GM18951 (cell line): ENCODE measurements at regions of chr5 and their contacts with region 1.

Region 1: DNA sequence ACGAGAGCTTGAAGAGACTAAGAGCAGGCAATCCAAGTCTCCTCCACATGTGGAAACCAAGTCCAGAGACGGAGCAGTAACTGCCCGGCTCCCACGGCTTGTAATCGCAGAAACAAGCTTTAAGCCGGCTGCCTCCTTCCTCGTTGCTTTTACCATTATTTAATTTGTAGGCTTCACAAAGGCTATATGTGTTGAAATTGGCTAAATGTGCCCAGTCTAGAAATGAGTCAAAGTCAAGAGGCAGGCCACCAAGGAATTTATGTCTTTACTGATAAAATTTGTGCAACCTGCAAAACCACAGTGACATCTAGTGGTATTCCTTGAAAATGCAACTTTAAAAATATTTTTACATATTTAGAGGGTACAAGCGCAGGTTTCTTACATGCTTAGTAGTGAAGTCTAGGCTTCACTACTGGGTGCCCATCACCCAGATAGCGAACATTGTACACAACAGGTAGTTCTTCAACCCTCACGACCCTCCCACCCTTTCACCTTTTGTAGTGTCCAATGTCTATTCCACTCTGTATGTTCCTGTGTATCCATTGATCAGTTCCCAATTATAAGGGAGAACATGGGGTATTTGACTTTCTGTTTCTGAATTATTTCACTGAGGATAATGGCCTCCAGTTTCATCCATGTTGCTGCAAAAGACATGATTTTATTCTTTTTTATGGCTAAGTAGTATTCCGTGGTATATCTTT is 33.5 kb upstream of the EBF1 start:
- POLR2A ChIP-seq: no peak

Region 2: GRCh38 chr5:157820593-157821252 is 1312.5 kb before region 1 on chr5:
- in situ Hi-C with region 1: loop called (anchors 25 kb)
- POLR2A ChIP-seq: no peak

Region 3: GRCh38 chr5:158074992-158075769 is 1058.0 kb before region 1 on chr5:
- in situ Hi-C with region 1: loop called (anchors 25 kb)
- POLR2A ChIP-seq: no peak

Region 4: DNA sequence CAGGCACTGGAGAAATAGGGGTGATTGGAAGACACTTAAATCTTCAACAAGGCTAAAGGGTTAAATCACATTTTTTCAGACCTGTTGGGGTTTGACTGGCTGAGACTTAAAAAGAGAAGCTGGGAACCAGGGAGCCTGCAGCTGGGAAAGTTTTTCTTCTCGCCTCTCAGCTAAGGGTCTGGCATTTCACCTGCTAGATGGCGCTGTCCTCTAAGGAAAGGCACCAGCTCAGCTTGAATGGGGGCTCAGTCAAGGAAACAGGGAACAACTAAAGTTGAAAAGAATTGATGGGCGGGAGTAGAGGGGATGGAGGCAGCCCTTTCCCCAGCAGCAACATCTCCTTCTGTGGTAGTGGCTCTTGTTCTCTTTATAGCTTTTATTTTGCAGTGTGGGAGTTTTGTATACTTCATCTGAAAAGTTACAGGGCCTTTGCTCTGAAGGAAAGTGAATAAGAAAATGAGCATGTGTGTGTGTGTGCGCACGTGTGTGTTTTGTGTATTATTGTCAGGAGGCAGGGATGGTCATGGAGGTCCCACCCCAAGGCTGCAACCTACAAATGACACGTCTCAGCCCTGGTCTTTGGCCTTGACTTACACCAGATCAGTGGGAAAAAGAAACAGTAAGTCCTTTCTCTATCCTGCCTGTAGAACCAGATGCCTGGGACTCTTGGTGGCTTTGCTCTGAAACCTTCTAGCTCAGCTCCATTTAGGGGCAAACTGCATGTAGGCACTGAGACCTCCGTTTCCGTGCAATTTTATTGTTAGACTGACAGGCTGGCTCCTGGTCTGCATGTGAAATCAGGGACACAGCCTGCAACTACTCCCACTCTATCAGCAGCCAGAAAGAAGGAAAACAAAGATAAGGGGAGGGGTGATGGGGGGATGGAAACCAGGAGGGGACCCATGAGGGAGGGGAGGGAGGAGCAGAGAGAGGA is 958.0 kb before region 1 on chr5:
- in situ Hi-C with region 1: loop called (anchors 10 kb)
- POLR2A ChIP-seq: no peak

Region 5: GRCh38 chr5:158751961-158752655 is 381.1 kb before region 1 on chr5:
- in situ Hi-C with region 1: no loop called
- POLR2A ChIP-seq: no peak

Region 6: GRCh38 chr5:158780656-158781237 is 352.4 kb before region 1 on chr5:
- in situ Hi-C with region 1: no loop called
- POLR2A ChIP-seq: no peak

Region 7: DNA sequence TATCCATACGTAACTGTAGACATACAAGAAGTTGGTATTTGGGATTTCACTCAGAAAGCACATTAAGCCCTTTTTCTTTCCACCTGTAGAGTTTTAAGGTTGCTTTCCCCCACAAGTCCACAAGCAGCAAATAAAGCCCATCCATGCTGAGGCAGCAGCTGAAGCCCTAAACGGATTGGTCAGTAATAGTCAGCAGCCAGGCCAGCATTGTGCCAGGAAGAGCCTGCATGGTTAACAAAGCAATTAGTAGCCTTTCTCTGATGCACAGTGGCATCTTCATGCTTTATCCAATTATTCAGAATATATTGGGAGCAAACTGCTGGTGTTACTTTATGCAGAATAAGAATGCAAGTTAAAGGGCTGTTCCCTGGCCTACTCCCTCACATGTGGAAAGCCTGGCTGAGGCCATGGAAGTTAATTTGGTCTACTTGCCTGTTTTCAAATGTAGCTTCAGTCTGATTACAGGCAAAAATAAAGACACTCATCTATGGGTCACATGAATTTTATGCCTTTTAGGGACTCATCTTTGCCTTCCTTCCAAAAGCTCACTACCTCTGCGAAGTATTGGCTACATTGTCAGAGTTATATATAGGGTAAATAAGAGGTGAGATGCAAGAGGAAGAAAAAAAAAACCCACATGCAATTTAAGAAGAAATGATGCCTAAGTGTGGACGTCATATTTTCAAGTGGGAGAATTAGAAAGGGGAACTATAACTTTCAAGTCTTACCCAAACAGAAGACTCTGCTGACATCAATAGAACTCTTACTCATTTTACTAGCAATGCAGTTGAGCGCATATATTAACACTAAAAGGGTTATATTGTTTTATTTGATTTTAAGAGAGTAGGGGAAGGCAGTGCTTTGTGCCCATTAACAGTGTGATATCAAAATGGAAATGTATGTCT is 49.4 kb before region 1 on chr5:
- in situ Hi-C with region 1: no loop called
- POLR2A ChIP-seq: no peak

Region 8: GRCh38 chr5:159324102-159324760 is 191.0 kb after region 1 on chr5:
- in situ Hi-C with region 1: no loop called
- POLR2A ChIP-seq: no peak